Activated naive CD4-positive, alpha-beta T cell treated with anti-CD3 and anti-CD28 coated beads for 36 hours (primary cell): ENCODE measurements at regions of chr11 and their contacts with region 1.

Region 1: DNA sequence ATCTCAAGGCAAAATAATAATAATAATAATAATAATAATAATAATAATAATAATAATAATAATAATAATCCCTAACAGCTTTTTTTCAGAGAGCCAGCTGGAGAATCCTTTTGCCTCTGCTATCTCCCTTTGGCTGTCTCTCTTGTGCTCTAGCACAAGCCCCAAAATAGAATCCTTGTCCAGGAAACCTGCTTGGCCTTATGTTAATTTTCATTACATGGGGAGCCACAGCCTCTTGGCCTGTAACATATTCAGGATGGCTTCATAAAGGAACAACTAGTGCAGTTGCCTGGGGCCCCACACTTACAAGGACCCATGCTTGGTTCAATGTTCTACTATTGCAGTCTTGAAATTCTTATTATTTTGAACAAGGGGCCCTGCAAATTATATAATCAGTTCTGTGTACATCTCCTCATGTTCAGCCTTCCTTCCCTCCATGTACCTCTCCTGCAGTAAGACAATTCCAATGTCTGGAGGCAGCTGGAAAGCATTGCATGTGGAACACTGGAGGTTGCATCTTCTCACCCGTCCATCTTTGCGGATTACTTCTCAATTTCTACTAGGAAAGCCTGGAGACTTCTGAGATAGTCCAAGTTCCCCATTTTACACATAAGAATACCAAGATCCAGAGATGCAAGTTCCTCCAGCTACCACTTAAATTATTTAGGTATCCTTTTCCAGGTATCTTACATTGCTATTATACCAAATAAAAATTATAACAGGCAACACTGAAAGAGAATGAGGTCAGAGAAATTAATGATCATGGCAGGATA is 37.8 kb upstream of the SORL1 start:
- DNase-seq: no peak
- H3K4me3 Mint-ChIP-seq: no peak overlapping the region
- H3K27ac Mint-ChIP-seq: no peak overlapping the region
- H3K4me1 Mint-ChIP-seq: peaks cover 58% of the 10 kb centered on the region
- H3K27me3 Mint-ChIP-seq: no peaks in the 10 kb centered on the region

Region 2: GRCh38 chr11:121163658-121164308 is 250.5 kb before region 1 on chr11:
- CTCF ChIA-PET with region 1: no interaction called
- intact Hi-C with region 1: no loop called
- DNase-seq: no peak
- H3K4me3 Mint-ChIP-seq: no peak overlapping the region
- H3K27ac Mint-ChIP-seq: no peak overlapping the region
- H3K4me1 Mint-ChIP-seq: no peaks in the 10 kb centered on the region
- H3K27me3 Mint-ChIP-seq: no peaks in the 10 kb centered on the region

Region 3: GRCh38 chr11:121341609-121342008 is 72.7 kb before region 1 on chr11:
- CTCF ChIA-PET with region 1: no interaction called
- intact Hi-C with region 1: loop called (anchors 2 kb)
- DNase-seq: peak; percentile 62
- H3K4me3 Mint-ChIP-seq: no peak overlapping the region
- H3K27ac Mint-ChIP-seq: no peak overlapping the region
- H3K4me1 Mint-ChIP-seq: peaks cover 16% of the 10 kb centered on the region
- H3K27me3 Mint-ChIP-seq: no peaks in the 10 kb centered on the region

Region 4: DNA sequence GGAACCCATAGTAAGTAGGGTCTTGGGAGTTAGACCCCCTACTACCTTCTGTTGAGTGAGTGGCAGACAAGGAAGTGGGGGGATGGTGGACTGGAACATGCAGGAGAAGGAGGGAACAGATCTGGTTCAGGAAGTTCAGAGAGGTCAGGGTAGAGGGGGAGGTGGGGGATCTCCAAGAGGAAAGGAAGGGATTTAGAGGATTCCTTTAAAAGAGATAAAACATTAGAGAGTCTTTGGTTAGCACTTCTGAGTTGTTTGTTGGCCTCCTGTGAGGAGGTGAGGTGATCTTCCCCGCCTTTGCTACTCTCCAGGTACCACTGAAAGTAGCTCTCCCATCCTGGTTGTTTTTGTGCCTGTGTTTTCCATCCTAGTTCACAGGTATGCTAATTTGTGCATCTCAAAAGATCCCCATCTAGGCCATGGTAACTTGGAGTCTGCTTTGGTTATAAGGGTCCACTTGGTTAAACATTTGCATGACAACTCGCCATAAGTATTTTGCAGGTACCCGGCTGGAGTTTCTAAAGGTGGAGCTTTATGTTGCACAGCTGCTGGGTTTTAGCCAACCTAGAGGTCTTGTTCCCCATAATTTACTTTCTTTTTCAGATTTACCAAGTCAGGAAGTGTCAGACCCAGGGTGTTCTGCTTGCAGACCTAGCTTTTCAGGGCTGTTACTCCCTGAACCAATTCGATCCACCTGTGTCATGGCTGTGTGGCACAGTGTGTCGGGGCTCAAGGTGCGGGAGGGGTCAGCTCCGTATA is 41.5 kb before region 1 on chr11:
- CTCF ChIA-PET with region 1: interaction called, 3 read pairs
- intact Hi-C with region 1: loop called (anchors 2 kb)
- DNase-seq: peak; percentile 26
- H3K4me3 Mint-ChIP-seq: peak overlapping the region; percentile 17
- H3K27ac Mint-ChIP-seq: no peak overlapping the region
- H3K4me1 Mint-ChIP-seq: peaks cover 73% of the 10 kb centered on the region
- H3K27me3 Mint-ChIP-seq: no peaks in the 10 kb centered on the region

Region 5: GRCh38 chr11:121431820-121432526 is 17.6 kb after region 1 on chr11:
- CTCF ChIA-PET with region 1: interaction called, 4 read pairs
- intact Hi-C with region 1: loop called (anchors 1 kb)
- DNase-seq: no peak
- H3K4me3 Mint-ChIP-seq: no peak overlapping the region
- H3K27ac Mint-ChIP-seq: no peak overlapping the region
- H3K4me1 Mint-ChIP-seq: peaks cover 45% of the 10 kb centered on the region
- H3K27me3 Mint-ChIP-seq: no peaks in the 10 kb centered on the region

Region 6: DNA sequence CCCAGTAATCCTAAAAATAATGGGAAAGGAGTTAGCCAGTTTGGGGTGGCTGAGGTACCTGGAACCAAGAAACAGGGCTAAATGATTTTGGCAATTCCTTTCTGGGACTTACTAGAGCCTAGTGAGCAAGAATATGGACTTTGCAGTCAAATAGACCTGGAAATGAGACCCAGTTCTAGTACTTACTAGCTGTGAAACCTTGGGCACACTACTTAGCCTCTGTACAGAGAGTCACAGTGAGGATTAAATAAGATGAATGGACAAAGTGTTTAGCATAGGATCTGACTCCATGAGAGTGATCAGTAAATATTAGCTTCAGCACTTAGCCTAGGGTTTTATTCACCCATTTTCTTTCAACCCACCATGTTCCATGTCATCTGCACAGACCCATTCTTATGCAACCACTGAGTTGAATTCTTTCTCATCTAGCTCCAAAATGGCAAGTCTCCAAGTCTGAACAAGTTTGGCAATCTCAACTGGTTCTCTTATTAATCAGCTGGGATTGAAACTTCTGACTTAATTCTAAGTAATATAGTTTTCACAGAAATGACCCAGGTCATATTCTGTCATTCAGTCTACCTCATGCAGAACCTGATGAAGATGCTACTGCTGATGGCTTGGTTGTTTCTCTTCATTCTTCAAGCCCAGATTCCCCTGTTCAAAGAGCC is 22.8 kb after region 1 on chr11:
- CTCF ChIA-PET with region 1: interaction called, 4 read pairs
- intact Hi-C with region 1: loop called (anchors 1 kb)
- DNase-seq: no peak
- H3K4me3 Mint-ChIP-seq: no peak overlapping the region
- H3K27ac Mint-ChIP-seq: peak overlapping the region; percentile 14
- H3K4me1 Mint-ChIP-seq: peaks cover 57% of the 10 kb centered on the region
- H3K27me3 Mint-ChIP-seq: no peaks in the 10 kb centered on the region

Region 7: DNA sequence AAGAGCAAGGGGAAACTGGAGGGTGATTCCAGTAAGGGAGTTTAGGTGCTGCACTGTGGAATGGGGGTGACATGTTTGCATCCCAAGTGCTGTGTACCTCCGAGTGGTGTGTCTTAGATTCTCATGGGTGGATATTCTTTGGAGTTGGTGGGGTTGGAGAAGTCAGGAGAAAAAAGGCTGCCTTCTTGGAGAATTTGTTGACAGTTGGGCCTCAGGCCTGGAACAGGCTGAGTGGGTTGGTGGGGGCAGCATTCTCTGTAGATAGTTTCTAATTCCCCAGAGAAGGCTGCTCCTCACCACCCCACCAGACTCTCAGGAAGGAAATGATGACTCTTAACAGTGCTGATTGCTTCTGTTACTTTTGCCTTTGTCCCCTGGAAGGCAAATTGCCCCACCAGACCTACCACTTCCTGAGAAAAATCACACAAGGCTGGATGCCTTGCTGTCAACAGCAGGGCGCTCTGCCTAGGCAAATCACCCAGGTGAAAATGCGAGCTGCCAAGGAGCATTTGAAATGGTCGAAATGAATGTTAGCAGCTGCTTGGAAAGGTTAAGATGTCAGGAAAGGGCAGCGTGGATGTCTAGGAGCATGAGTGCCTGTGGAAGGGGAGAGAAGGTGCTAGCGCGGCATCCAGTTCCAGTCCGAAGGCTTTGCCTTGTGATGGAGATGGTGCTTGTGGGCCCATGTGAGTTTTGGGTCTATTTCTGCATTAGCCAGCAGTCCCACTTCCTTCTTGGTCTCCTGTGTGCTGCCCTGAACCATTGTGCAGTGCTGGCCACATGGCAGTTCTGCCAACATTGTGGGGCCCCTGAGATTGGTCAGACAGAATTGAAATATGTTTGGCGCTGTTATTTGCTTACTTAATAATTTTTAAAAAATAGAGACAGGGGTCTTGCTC is 68.2 kb after region 1 on chr11:
- CTCF ChIA-PET with region 1: interaction called, 7 read pairs
- intact Hi-C with region 1: loop called (anchors 2 kb)
- DNase-seq: peak; percentile 80
- H3K4me3 Mint-ChIP-seq: peak overlapping the region; percentile 88
- H3K27ac Mint-ChIP-seq: peak overlapping the region; percentile 98
- H3K4me1 Mint-ChIP-seq: peaks cover 39% of the 10 kb centered on the region
- H3K27me3 Mint-ChIP-seq: no peaks in the 10 kb centered on the region

Region 8: DNA sequence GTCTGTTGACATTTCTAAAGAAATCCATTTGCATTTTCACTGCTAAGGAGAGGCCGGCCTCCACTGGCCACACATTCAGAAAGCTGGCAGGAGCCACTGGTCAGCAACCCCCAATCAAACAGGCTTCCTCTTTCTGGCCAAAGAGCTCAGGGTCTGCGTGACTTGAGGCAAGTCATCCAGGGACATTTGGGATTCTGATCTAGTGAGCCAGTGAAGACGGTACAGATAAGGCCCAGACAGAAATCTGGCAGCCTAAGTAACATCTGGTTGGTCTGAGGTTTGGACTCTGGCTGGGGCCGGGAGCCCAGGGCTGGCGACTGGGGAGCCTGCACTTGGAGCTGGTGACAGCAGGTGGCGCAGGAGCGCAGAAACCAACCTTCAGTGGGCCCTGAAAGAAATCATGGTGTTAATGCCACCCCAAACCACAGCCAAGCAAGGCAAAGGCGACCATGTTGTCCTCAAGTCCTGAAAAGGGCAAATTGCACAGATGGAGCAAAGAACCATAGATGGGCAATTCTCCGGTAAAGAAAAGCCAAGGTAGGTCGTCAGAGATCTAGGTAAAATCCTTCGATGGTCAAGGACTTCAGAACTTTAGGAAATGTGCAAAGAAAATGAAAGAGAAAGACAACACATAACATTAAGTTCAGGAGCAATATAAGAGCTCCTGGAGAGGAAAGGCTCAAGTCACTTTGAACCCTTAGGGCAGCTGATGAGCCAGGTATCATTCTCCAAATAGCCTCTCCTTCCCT is 801.1 kb after region 1 on chr11:
- CTCF ChIA-PET with region 1: no interaction called
- intact Hi-C with region 1: no loop called
- DNase-seq: peak; percentile 41
- H3K4me3 Mint-ChIP-seq: no peak overlapping the region
- H3K27ac Mint-ChIP-seq: no peak overlapping the region
- H3K4me1 Mint-ChIP-seq: no peaks in the 10 kb centered on the region
- H3K27me3 Mint-ChIP-seq: peaks cover 6% of the 10 kb centered on the region